ENCODE measurements at regions of chrX and their contacts with region 1.

Region 1: GRCh38 chrX:71181910-71182799 is 37.5 kb downstream of the NLGN3 start:
- DNase-seq: peak; percentile 54 to 92
- H3K4me3 ChIP-seq: peak overlapping the region; percentile 50 to 62
- H3K27ac ChIP-seq: peak overlapping the region; percentile 76 to 77
- H3K4me1 ChIP-seq: no peaks in the 10 kb centered on the region
- H3K27me3 ChIP-seq: no peaks in the 10 kb centered on the region
- CTCF ChIP-seq: no peak

Region 2: DNA sequence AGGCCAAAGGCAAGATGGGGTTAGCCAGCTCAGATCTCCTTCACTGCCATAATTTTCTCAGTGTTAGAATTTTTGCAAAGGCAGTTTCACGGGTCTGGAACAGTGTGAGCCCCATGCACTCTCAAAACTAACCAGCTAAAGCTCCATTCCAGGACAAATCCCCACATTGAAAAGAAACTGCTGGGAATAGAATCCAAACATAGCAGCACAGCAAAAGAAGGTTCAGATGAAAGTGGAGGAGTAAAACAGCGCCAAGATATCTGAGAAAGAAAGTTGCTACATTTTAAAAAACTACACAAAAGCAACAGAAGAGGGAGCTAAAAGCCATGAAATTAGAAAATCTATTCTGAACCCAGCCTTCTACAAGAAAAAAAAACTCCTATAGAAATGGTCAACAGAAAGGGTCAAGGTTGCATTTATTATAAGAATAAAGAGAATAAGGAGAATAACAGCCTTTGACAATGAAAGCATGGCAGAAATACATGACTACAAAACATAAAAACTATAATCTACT is 211.6 kb before region 1 on chrX:
- intact Hi-C with region 1: loop called (anchors 1 kb)
- DNase-seq: no peak
- H3K4me3 ChIP-seq: no peak overlapping the region
- H3K27ac ChIP-seq: no peak overlapping the region
- H3K4me1 ChIP-seq: no peaks in the 10 kb centered on the region
- H3K27me3 ChIP-seq: no peaks in the 10 kb centered on the region
- CTCF ChIP-seq: peak in 2 of 3 experiments; percentile 10 to 16

Region 3: DNA sequence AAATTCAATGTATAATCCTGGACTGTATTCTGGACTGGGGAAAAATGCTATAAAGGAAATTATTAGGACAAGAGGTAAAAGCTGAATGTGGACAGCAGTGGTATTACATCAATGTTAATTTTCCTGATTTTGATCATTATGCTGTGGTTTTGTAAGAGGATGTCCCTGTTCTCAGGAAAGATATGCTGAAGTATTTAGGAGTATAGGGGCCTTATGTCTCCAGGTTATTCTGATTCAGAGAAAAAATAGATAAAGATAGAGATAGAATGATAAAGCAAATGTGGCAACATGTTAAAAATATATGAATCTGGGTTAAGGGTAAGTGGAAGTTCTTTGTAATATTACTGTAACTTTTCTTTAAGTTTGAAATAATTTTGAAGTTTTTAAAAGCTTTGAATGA is 149.6 kb before region 1 on chrX:
- intact Hi-C with region 1: no loop called
- DNase-seq: no peak
- H3K4me3 ChIP-seq: no peak overlapping the region
- H3K27ac ChIP-seq: no peak overlapping the region
- H3K4me1 ChIP-seq: no peaks in the 10 kb centered on the region
- H3K27me3 ChIP-seq: no peaks in the 10 kb centered on the region
- CTCF ChIP-seq: no peak

Region 4: DNA sequence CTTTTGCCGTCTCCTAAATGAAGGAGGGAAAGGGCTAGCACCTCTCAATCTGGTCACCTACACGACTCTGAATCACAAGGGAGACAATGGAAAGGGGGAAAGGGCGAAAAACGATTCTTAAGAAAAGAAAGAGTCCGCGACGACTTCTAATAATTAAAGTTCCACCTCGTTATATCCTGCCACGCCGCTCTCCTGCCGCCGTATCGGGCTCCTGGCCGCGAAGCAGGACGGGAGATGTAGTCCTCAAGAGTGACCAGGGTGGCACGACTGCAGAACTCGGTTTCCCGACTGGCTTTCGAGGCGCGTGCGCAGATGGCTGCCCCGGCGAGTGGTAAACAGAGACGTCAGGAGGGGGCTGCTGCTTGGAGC is 86.6 kb before region 1 on chrX and contains the start of gene FOXO4:
- intact Hi-C with region 1: loop called (anchors 1 kb)
- DNase-seq: peak; percentile 74 to 93
- H3K4me3 ChIP-seq: peak within 1 kb of the TSS; percentile 55 to 64
- H3K27ac ChIP-seq: peak within 1 kb of the TSS; percentile 49 to 73
- H3K4me1 ChIP-seq: peaks cover 0 to 4% of the 10 kb centered on the region in 2 donors
- H3K27me3 ChIP-seq: no peaks in the 10 kb centered on the region
- CTCF ChIP-seq: no peak
- total RNA-seq, gene FOXO4: 8.0 TPM

Region 5: GRCh38 chrX:71283403-71284143 is 101.4 kb after region 1 on chrX and contains the start of gene NONO:
- intact Hi-C with region 1: loop called (anchors 1 kb)
- DNase-seq: peak; percentile 36 to 91
- H3K4me3 ChIP-seq: peak within 1 kb of the TSS; percentile 63 to 64
- H3K27ac ChIP-seq: peak within 1 kb of the TSS; percentile 86 to 89
- H3K4me1 ChIP-seq: no peaks in the 10 kb centered on the region
- H3K27me3 ChIP-seq: no peaks in the 10 kb centered on the region
- CTCF ChIP-seq: peak in 2 of 3 experiments; percentile 11 to 19
- total RNA-seq, gene NONO: 178 TPM